ENCODE measurements at regions of chr20 and their contacts with region 1.

Region 1: GRCh38 chr20:31496761-31497295 is 17.4 kb upstream of the HM13 start:
- DNase-seq: no peak
- H3K4me3 ChIP-seq: no peak overlapping the region
- H3K4me3 Mint-ChIP-seq: no peak overlapping the region
- H3K27ac ChIP-seq: no peak overlapping the region
- H3K27ac Mint-ChIP-seq: peak overlapping the region in 2 of 8 donors; percentile 55 to 59
- H3K4me1 ChIP-seq: no peaks in the 10 kb centered on the region
- H3K4me1 Mint-ChIP-seq: no peaks in the 10 kb centered on the region
- H3K27me3 ChIP-seq: no peaks in the 10 kb centered on the region
- H3K27me3 Mint-ChIP-seq: peaks cover 12 to 33% of the 10 kb centered on the region in 2 donors

Region 2: GRCh38 chr20:31330893-31331292 is 165.9 kb before region 1 on chr20:
- CTCF ChIA-PET with region 1: no interaction called
- POLR2A ChIA-PET with region 1: no interaction called
- DNase-seq: no peak
- H3K4me3 ChIP-seq: no peak overlapping the region
- H3K4me3 Mint-ChIP-seq: no peak overlapping the region
- H3K27ac ChIP-seq: no peak overlapping the region
- H3K27ac Mint-ChIP-seq: no peak overlapping the region
- H3K4me1 ChIP-seq: no peaks in the 10 kb centered on the region
- H3K4me1 Mint-ChIP-seq: no peaks in the 10 kb centered on the region
- H3K27me3 ChIP-seq: no peaks in the 10 kb centered on the region
- H3K27me3 Mint-ChIP-seq: no peaks in the 10 kb centered on the region

Region 3: DNA sequence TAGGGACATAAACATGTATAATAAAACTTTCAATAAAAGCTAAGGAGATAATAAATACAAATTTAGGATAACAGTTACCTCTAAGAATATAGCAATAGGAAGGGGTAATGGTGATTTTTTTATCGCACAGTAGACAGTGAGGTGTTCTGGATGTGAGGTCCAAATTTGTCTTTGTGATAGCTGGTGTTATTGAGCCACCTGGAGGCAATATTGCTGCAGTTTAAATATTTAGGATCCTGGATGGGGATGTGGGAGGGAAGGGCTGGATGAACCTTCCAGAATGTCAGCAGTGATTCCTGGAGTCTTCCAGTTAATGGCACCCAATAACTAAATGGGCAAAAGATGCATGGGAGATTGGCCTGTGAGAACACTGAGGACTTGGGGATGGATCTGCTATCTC is 42.5 kb before region 1 on chr20:
- CTCF ChIA-PET with region 1: interaction called, 42 read pairs
- POLR2A ChIA-PET with region 1: no interaction called
- DNase-seq: no peak
- H3K4me3 ChIP-seq: no peak overlapping the region
- H3K4me3 Mint-ChIP-seq: no peak overlapping the region
- H3K27ac ChIP-seq: no peak overlapping the region
- H3K27ac Mint-ChIP-seq: no peak overlapping the region
- H3K4me1 ChIP-seq: no peaks in the 10 kb centered on the region
- H3K4me1 Mint-ChIP-seq: no peaks in the 10 kb centered on the region
- H3K27me3 ChIP-seq: no peaks in the 10 kb centered on the region
- H3K27me3 Mint-ChIP-seq: peaks cover 14 to 39% of the 10 kb centered on the region in 2 donors

Region 4: GRCh38 chr20:31514159-31515071 is 17.6 kb after region 1 on chr20 and contains the start of gene HM13:
- CTCF ChIA-PET with region 1: interaction called, 10 read pairs
- POLR2A ChIA-PET with region 1: no interaction called
- DNase-seq: peak; percentile 85 to 93 (median 86)
- H3K4me3 ChIP-seq: peak within 1 kb of the TSS; percentile 98
- H3K4me3 Mint-ChIP-seq: peak within 1 kb of the TSS in 2 of 7 donors; percentile 57 to 83
- H3K27ac ChIP-seq: peak within 1 kb of the TSS; percentile 91
- H3K27ac Mint-ChIP-seq: peak within 1 kb of the TSS in 7 of 8 donors; percentile 66 to 94 (median 91)
- H3K4me1 ChIP-seq: peaks cover 39% of the 10 kb centered on the region
- H3K4me1 Mint-ChIP-seq: peaks cover 10 to 13% (median 13%) of the 10 kb centered on the region in 3 donors
- H3K27me3 ChIP-seq: no peaks in the 10 kb centered on the region
- H3K27me3 Mint-ChIP-seq: peaks cover 0 to 3% of the 10 kb centered on the region in 2 donors
- total RNA-seq, gene HM13: 153 to 167 TPM

Region 5: DNA sequence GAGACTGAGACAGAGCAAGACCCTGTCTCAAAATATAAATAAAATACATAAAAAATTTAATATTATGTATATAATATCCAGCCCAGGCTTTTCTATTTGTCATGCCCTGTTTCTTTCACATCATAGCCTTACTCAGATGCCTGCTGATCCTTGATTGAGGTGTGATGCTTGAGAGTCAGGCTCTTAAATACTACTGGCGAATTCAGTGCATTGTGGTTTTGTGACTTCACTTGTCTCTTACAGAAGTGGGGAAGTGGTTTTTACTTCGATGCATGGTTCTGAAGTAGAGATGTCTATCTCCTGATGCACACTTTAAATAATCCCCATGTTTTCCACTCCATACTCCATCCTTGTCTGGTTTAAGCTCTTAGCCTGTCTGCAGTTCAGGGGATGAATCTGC is 890.4 kb after region 1 on chr20:
- CTCF ChIA-PET with region 1: no interaction called
- POLR2A ChIA-PET with region 1: no interaction called
- DNase-seq: peak in 3 of 5 donors; percentile 58 to 77 (median 66)
- H3K4me3 ChIP-seq: peak overlapping the region; percentile 5
- H3K4me3 Mint-ChIP-seq: peak overlapping the region in 1 of 7 donors; percentile 3
- H3K27ac ChIP-seq: no peak overlapping the region
- H3K27ac Mint-ChIP-seq: peak overlapping the region; percentile 25 to 71 (median 44)
- H3K4me1 ChIP-seq: peaks cover 27% of the 10 kb centered on the region
- H3K4me1 Mint-ChIP-seq: peaks cover 47 to 78% (median 73%) of the 10 kb centered on the region in 3 donors
- H3K27me3 ChIP-seq: no peaks in the 10 kb centered on the region
- H3K27me3 Mint-ChIP-seq: no peaks in the 10 kb centered on the region